ENCODE measurements at regions of chr5 and their contacts with region 1.

Region 1: DNA sequence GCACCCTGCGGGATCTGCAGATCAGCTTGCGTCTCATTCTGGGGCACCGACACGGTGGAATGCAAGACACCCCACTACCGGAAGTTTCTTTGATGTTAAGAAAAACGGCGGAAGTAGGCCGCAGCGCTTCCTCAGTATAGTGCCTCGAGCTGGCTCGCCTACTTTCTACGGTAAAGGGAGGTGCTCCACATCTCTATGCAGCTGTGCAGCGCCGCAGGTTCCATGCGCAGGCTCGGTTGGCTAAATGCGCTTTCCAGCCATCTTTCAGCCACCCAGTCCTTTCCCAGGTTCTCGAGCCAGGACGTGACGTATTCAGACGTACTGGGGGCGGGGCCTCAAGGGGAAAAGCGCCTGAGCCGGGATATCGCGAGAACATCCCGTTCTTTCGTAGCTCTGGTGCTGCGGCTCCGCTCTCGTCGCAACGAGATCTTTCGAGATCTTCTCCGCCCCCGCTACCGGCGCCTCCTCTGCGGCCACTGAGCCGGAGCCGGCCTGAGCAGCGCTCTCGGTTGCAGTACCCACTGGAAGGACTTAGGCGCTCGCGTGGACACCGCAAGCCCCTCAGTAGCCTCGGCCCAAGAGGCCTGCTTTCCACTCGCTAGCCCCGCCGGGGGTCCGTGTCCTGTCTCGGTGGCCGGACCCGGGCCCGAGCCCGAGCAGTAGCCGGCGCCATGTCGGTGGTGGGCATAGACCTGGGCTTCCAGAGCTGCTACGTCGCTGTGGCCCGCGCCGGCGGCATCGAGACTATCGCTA is at the start of gene HSPA4:
- DNase-seq: peak; percentile 88 to 99
- H3K4me3 ChIP-seq: peak within 1 kb of the TSS; percentile 92 to 95
- H3K27ac ChIP-seq: peak within 1 kb of the TSS; percentile 96 to 98
- H3K4me1 ChIP-seq: peaks cover 0 to 46% of the 10 kb centered on the region in 2 donors
- H3K27me3 ChIP-seq: no peaks in the 10 kb centered on the region
- CTCF ChIP-seq: no peak
- total RNA-seq, gene HSPA4: 16.2 TPM

Region 2: GRCh38 chr5:132410451-132411381 is 641.0 kb before region 1 on chr5:
- intact Hi-C with region 1: loop called (anchors 2 kb)
- DNase-seq: peak; percentile 63 to 90
- H3K4me3 ChIP-seq: peak overlapping the region; percentile 88 to 96
- H3K27ac ChIP-seq: peak overlapping the region; percentile 97 to 100
- H3K4me1 ChIP-seq: peaks cover 0 to 43% of the 10 kb centered on the region in 2 donors
- H3K27me3 ChIP-seq: no peaks in the 10 kb centered on the region
- CTCF ChIP-seq: peak; percentile 46 to 65 (median 56)

Region 3: DNA sequence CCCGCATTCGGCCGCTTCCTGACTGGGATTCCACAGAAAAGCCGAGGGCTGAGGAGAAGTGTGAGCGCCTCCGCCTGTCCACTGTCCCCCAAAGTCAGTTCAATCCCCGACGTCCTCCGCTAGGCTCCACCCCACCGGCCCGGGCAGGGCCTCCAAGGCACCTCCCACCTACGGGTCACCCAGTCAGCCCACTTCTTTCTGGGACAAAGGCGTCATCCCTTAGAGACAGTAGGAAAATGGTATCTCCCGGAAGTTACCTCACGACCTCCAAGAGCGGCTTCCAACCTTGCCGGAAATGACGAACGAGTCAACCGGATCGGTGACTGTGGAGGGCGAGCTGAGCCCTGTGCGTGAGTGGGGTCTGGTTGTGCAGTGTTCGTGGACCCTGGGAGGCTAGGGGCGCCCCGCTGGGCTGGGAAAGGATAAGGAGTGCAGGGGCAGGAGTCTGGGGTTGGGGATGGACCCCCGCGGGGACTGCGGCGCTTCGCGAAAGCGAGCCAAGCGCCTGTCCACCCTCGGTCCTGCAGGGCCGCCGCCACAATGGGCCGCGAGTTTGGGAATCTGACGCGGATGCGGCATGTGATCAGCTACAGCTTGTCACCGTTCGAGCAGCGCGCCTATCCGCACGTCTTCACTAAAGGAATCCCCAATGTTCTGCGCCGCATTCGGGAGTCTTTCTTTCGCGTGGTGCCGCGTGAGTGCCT is 185.3 kb before region 1 on chr5 and contains the starts of genes GDF9 and UQCRQ:
- intact Hi-C with region 1: loop called (anchors 1 kb)
- DNase-seq: peak; percentile 92 to 98
- H3K4me3 ChIP-seq: peak within 1 kb of the TSS; percentile 82 to 85
- H3K27ac ChIP-seq: peak within 1 kb of the TSS; percentile 90 to 95
- H3K4me1 ChIP-seq: peaks cover 5 to 14% of the 10 kb centered on the region in 2 donors
- H3K27me3 ChIP-seq: no peaks in the 10 kb centered on the region
- CTCF ChIP-seq: peak in 1 of 3 experiments; percentile 23
- total RNA-seq, gene GDF9: not detected
- total RNA-seq, gene UQCRQ: 53.6 TPM

Region 4: DNA sequence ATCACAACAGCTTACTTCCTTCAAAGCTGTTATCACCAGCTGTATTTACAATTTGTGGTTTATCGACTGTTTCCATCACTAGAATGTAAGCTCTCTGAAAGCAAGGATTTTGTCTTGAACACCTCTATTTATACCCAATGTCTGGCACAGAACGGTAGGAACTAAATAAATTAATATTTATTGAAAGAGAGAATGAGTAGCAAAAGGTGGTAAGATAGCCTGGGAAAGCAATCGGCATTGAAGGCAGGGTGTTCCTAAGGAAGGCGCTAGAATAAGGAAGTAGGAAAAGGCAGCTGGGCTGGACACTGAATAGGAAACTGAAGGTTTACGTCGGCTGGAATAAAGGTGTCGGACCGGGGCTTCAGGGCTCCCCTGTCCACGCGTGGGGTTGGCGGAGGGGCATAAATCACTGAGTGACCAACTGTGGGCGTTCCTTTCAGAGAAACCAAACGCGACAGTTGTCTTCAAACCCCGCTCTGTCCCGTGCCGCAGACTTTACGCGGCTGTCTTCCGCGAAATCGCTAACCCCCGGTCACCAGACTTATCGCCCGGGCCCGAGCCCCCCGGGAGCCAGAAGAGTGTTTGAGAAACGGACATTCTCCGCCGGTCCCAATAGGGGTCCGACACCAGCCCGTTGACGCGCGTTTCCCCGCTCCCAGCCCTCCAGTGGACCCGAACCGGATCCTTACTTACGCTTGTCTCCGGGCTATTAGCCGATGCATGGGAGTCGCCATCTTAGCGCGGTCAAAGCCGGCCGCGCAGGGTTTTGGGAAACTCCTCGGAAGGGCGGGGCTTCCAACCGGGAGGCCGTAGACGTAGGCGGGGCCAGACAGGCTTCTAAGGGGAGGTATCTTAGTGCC is 25.7 kb before region 1 on chr5 and contains the start of gene ZCCHC10:
- intact Hi-C with region 1: loop called (anchors 1 kb)
- DNase-seq: peak; percentile 75 to 97
- H3K4me3 ChIP-seq: peak within 1 kb of the TSS; percentile 86 to 87
- H3K27ac ChIP-seq: peak within 1 kb of the TSS; percentile 89 to 97
- H3K4me1 ChIP-seq: peaks cover 4 to 17% of the 10 kb centered on the region in 2 donors
- H3K27me3 ChIP-seq: no peaks in the 10 kb centered on the region
- CTCF ChIP-seq: no peak
- total RNA-seq, gene ZCCHC10: 1.9 TPM